Gastrocnemius medialis (tissue), 4 donors: ENCODE measurements at regions of chr17 and their contacts with region 1.

Region 1: DNA sequence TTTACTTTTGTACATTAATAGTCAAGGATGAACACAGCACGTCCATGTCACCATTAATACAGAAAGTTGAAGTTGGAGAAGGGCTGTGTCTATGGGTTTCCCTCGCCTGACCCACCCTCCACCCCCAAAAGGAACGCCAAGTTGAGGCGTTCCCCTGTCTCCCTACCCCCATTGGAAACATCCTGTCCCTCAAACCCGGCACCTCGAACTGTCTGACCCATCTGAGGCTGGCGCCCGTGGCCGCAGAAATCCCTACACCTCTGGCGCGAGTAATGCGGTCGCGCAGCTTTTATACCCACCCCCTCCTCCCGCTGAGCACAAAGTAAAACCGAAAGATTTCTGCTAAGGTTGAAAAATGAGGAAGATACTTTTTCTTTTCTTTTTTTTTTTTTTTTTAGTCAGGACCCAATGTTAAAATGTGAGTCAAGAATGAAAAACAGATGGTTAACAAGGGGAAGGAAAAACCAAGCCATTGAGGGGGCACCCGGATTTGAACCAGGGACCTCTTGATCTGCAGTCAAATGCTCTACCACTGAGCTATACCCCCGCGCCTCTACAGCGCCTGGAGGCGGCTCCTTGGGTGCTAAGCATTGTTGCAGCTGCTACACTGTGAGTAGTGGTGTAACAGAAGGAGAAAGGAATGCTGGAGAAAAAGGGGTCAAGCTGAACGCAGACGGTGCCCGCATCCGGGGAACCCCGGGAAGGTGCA is 887 bp upstream of the LASP1 start:
- DNase-seq: peak; percentile 77 to 89
- ATAC-seq: peak; percentile 78 to 81
- H3K4me3 ChIP-seq: peak overlapping the region; percentile 70 to 99 (median 87)
- H3K27ac ChIP-seq: peak overlapping the region; percentile 87 to 92 (median 90)
- H3K4me1 ChIP-seq: peaks cover 16 to 21% of the 10 kb centered on the region in 2 donors
- H3K27me3 ChIP-seq: no peaks in the 10 kb centered on the region
- CTCF ChIP-seq: peak in 1 of 5 experiments; percentile 7
- POLR2A ChIP-seq: no peak

Region 2: DNA sequence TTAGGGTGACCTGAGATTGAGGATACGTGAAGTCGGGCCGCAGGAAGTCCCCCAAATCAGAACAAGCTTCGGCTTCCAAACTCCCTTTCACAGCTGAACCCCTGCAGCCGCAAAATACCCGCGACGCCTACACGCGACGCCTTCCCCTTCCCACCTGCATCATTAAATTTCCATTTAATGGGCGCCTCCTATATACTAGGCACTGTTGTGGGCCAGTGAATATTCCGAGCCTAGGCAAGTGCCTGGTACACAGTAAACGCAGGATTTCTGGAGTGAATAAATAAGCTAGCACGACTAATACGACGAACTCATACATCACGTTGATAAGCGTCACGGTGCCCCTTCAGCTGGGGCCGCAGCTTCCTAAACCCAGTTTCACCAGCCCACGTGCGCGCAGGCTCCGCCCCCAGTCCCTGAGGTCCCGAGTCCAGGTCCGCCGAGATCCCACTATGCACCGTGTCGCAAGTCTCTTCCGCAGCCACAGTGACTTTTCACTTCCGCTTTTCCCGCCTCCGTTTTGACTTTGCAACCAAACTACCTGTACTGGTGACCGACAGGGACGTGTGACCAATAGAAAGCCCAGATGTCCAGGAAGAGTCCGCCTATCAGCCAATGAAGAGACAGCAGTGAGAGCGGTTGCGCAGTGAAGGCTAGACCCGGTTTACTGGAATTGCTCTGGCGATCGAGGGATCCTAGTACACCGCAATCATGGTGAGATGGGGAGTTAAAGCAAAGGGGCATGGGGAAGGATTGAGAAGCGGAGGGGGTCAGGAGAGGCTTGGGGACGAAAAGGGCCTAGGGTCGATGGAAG is 116.6 kb before region 1 on chr17 and contains the start of gene PSMB3:
- in situ Hi-C with region 1: no loop called
- intact Hi-C with region 1: loop called (anchors 2 kb)
- DNase-seq: peak; percentile 98 to 99
- ATAC-seq: peak; percentile 97 to 98
- H3K4me3 ChIP-seq: peak within 1 kb of the TSS; percentile 75 to 97 (median 90)
- H3K27ac ChIP-seq: peak within 1 kb of the TSS; percentile 92 to 96 (median 94)
- H3K4me1 ChIP-seq: peaks cover 27 to 41% of the 10 kb centered on the region in 2 donors
- H3K27me3 ChIP-seq: peaks cover 24 to 33% (median 29%) of the 10 kb centered on the region in 3 donors
- CTCF ChIP-seq: no peak
- POLR2A ChIP-seq: peak; percentile 53 to 85
- total RNA-seq, gene PSMB3: 211 to 334 (median 280) TPM

Region 3: DNA sequence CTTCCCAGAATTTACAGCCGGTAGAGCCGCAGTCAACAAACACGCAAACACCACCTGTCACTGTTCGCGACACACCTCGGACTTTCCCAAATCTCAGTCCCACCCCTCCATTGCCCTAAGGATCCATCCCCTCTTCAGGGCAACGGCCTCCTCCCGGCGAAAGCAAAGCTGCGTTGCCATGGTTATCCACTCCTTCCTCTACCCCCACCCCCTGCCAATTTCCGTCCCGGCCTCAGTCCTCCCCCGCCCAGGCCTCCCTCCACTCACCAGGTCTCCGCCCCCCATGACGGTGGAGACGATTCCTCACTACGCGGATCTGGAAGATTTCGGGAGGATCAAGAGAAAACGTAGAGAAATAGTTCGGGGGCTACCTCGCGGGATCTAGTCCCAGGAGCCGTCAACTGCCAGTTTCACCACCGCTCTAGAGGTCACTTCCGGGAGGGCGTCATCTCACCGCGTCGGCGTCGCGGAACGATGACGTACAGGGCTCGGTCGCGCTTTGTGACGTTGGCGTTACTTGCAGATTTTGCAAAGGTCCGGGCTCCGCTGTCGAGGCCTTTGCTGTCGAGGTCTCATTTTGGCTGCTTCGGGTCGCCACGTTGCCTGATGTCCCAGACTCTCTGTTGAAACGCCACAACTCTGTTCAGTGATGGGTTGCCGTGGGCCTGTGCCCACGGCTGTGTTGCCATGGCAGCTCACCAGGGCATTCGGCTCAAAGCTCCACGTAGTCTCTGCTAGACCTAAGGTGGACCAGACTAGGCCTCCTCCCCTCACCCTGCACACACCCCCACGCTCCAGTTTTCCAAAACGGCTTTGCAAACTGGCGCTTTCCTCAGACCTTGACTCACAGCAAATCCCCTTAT is 43.8 kb before region 1 on chr17 and contains the start of gene CWC25:
- in situ Hi-C with region 1: no loop called
- intact Hi-C with region 1: loop called (anchors 1 kb)
- DNase-seq: peak; percentile 79 to 96
- ATAC-seq: peak; percentile 96 to 97
- H3K4me3 ChIP-seq: peak within 1 kb of the TSS; percentile 69 to 100 (median 90)
- H3K27ac ChIP-seq: peak within 1 kb of the TSS; percentile 96 to 99 (median 98)
- H3K4me1 ChIP-seq: peaks cover 18 to 21% of the 10 kb centered on the region in 2 donors
- H3K27me3 ChIP-seq: no peaks in the 10 kb centered on the region
- CTCF ChIP-seq: no peak
- POLR2A ChIP-seq: peak; percentile 71 to 85
- total RNA-seq, gene CWC25: 9.1 to 14.4 (median 12.3) TPM

Region 4: DNA sequence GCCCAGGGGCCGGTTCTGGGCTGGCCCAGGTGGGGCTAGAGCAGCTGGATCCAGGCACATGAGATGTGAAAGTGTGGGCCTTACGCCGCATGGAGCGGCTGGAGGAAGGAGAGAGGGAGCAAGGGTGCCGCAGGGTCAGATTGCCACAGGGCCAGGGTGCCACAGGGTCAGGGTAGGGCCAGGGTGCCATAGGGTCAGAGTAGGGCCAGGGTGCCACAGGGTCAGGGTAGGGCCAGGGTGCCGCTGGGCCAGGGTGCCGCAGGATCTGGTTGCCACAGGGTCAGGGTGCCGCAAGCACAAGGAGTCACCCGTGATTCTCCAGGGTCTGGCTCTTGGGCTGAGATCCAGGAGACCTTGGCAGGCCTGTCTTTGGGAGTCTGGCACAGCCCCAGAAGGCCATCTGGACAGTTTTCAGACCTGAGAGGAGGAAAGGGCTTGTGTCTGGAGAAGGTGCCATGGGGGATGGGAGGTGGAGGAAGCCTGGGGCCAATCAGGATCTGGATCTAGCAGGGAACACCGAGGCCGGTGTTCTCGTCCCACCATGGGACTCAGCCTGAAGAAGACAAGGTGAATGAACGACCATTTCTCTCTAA is 43.3 kb after region 1 on chr17:
- in situ Hi-C with region 1: no loop called
- intact Hi-C with region 1: no loop called
- DNase-seq: no peak
- ATAC-seq: peak; percentile 34 to 45
- H3K4me3 ChIP-seq: no peak overlapping the region
- H3K27ac ChIP-seq: peak overlapping the region; percentile 39 to 68 (median 63)
- H3K4me1 ChIP-seq: peaks cover 28 to 29% of the 10 kb centered on the region in 2 donors
- H3K27me3 ChIP-seq: no peaks in the 10 kb centered on the region
- CTCF ChIP-seq: no peak
- POLR2A ChIP-seq: no peak

Region 5: GRCh38 chr17:38922538-38923297 is 53.7 kb after region 1 on chr17:
- in situ Hi-C with region 1: no loop called
- intact Hi-C with region 1: loop called (anchors 2 kb)
- DNase-seq: peak; percentile 50 to 65
- ATAC-seq: peak; percentile 53 to 61
- H3K4me3 ChIP-seq: peak overlapping the region in 1 of 4 donors; percentile 13
- H3K27ac ChIP-seq: peak overlapping the region; percentile 62 to 75 (median 68)
- H3K4me1 ChIP-seq: peaks cover 27 to 40% of the 10 kb centered on the region in 2 donors
- H3K27me3 ChIP-seq: no peaks in the 10 kb centered on the region
- CTCF ChIP-seq: no peak
- POLR2A ChIP-seq: no peak

Region 6: GRCh38 chr17:39164675-39165143 is 295.7 kb after region 1 on chr17:
- in situ Hi-C with region 1: loop called in 1 of 4 experiments (anchors 25 kb)
- intact Hi-C with region 1: no loop called
- DNase-seq: peak; percentile 82 to 89
- ATAC-seq: peak; percentile 86 to 92
- H3K4me3 ChIP-seq: peak overlapping the region; percentile 57 to 67 (median 58)
- H3K27ac ChIP-seq: peak overlapping the region; percentile 8 to 45 (median 28)
- H3K4me1 ChIP-seq: peaks cover 8 to 14% of the 10 kb centered on the region in 2 donors
- H3K27me3 ChIP-seq: no peaks in the 10 kb centered on the region
- CTCF ChIP-seq: peak; percentile 74 to 87 (median 86)
- POLR2A ChIP-seq: no peak